HepG2 (cell line): ENCODE measurements at regions of chr1 and their contacts with region 1.

Region 1: GRCh38 chr1:198088360-198089071 is 68.3 kb upstream of the NEK7 start:
- DNase-seq: peak; percentile 7
- ATAC-seq: no peak
- H3K4me3 ChIP-seq: no peak overlapping the region
- H3K27ac ChIP-seq: no peak overlapping the region
- H3K4me1 ChIP-seq: peaks cover 15% of the 10 kb centered on the region
- H3K27me3 ChIP-seq: no peaks in the 10 kb centered on the region
- CTCF ChIP-seq: peak; percentile 47
- EP300 ChIP-seq: no peak
- POLR2A ChIP-seq: no peak
- RAD21 ChIP-seq: no peak

Region 2: DNA sequence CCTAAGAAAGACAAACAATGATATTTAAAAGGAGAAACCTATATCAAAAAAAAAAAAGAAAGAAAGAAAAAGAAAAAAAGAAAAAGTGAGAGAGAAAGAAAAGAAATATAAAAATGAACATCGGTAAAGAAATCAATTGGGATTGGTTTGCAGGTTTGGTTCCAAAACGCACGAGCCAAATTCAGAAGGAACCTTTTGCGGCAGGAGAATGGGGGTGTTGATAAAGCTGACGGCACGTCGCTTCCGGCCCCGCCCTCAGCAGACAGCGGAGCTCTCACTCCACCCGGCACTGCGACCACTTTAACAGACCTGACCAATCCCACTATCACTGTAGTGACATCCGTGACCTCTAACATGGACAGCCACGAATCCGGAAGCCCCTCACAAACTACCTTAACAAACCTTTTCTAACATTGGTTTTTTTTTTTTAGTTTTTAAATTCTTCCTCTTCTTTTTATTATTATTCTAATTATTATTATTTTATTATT is 159.6 kb before region 1 on chr1:
- CTCF ChIA-PET with region 1: no interaction called
- POLR2A ChIA-PET with region 1: no interaction called
- in situ Hi-C with region 1: no loop called
- intact Hi-C with region 1: no loop called
- DNase-seq: no peak
- ATAC-seq: no peak
- H3K4me3 ChIP-seq: no peak overlapping the region
- H3K27ac ChIP-seq: no peak overlapping the region
- H3K4me1 ChIP-seq: no peaks in the 10 kb centered on the region
- H3K27me3 ChIP-seq: no peaks in the 10 kb centered on the region; a peak in 1 of 5 replicates
- CTCF ChIP-seq: no peak
- EP300 ChIP-seq: no peak
- POLR2A ChIP-seq: no peak
- RAD21 ChIP-seq: no peak

Region 3: GRCh38 chr1:198275597-198275996 is 187.1 kb after region 1 on chr1:
- CTCF ChIA-PET with region 1: no interaction called
- POLR2A ChIA-PET with region 1: no interaction called
- in situ Hi-C with region 1: no loop called
- intact Hi-C with region 1: loop called (anchors 10 kb)
- DNase-seq: no peak
- ATAC-seq: no peak
- H3K4me3 ChIP-seq: no peak overlapping the region
- H3K27ac ChIP-seq: no peak overlapping the region
- H3K4me1 ChIP-seq: no peaks in the 10 kb centered on the region
- H3K27me3 ChIP-seq: no peaks in the 10 kb centered on the region
- CTCF ChIP-seq: no peak
- EP300 ChIP-seq: no peak
- POLR2A ChIP-seq: no peak
- RAD21 ChIP-seq: no peak

Region 4: DNA sequence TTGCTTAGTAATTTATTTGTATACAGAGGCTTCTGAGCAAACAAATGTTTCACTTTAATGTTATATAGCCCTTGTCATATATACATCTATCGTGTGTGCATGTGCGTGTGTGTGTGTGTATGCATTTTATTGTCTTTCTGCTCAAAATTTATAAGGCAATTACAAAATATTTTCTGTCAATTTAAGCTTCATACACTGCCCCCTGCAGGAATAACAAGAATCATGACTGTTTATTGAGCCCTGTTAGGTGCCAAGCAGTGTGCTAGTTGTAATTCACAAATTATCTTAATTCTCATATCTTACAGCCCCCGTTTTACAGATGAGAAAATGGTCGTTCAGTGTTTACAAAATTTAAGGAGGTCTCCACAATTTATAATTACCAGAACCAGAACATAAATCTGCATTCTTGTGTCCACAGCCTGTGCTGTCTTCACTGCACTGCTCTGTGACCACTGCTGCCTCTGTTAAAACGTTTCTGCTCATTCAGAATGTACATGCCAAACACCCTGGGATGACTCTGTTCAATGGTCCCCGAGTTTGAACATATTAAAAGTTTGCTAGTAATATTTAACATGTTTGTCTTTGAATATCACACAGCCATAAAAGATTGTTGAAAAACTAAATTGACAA is 270.6 kb after region 1 on chr1:
- CTCF ChIA-PET with region 1: interaction called, 8 read pairs
- POLR2A ChIA-PET with region 1: no interaction called
- in situ Hi-C with region 1: no loop called
- intact Hi-C with region 1: loop called (anchors 1 kb)
- DNase-seq: peak; percentile 2
- ATAC-seq: no peak
- H3K4me3 ChIP-seq: no peak overlapping the region
- H3K27ac ChIP-seq: no peak overlapping the region
- H3K4me1 ChIP-seq: no peaks in the 10 kb centered on the region
- H3K27me3 ChIP-seq: no peaks in the 10 kb centered on the region
- CTCF ChIP-seq: peak; percentile 53
- EP300 ChIP-seq: no peak
- POLR2A ChIP-seq: no peak
- RAD21 ChIP-seq: no peak

Region 5: DNA sequence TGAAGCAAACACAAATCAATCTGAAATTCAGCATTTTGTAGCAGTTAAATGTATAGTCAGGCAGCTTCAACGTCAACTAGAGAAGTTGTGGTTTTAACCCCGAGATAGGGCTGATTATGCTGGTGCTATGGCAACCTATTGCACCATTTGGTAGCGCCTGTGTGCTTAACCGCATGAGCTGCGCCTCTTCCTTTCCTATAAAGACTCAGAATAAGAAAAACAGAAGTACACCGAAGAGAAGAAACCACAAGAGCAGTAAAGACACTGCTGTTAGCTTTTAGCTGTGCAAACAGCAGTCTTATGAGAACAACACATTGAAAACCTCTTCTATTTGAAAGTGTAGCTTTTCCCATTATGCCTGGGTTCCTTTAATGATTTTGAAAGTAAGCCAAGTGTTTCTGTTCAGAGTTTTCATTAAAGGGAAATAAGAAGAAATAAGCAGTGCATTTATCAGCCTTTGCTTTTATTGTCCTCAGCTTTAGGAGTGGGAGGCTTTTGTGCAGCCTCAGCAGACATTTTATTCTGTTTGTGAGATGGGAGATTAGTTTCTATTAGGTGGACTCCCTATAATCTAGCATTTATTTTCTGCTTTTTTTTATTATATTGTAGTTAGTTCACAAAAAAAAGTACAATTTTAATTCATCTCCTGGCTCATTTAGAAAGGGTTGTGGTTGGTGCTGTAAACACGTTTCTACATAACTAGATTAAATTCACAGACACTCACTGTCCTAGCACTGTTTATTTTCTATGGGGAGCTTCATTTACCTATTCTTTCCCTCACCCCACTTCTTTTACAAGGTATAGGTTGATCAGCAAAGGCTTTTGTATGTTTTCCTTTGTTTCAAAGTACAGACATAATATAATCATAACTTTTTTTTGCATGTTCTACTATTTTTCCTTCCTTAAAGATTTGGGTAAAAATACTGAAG is 593.6 kb after region 1 on chr1:
- CTCF ChIA-PET with region 1: no interaction called
- POLR2A ChIA-PET with region 1: no interaction called
- in situ Hi-C with region 1: loop called (anchors 25 kb)
- intact Hi-C with region 1: no loop called
- DNase-seq: no peak
- ATAC-seq: no peak
- H3K4me3 ChIP-seq: no peak overlapping the region
- H3K27ac ChIP-seq: no peak overlapping the region
- H3K4me1 ChIP-seq: no peaks in the 10 kb centered on the region
- H3K27me3 ChIP-seq: no peaks in the 10 kb centered on the region
- CTCF ChIP-seq: no peak
- EP300 ChIP-seq: no peak
- POLR2A ChIP-seq: no peak
- RAD21 ChIP-seq: no peak

Region 6: GRCh38 chr1:198699167-198700015 is 610.9 kb after region 1 on chr1:
- CTCF ChIA-PET with region 1: no interaction called
- POLR2A ChIA-PET with region 1: no interaction called
- in situ Hi-C with region 1: loop called (anchors 25 kb)
- intact Hi-C with region 1: loop called (anchors 5 kb)
- DNase-seq: peak; percentile 30
- ATAC-seq: peak; percentile 99
- H3K4me3 ChIP-seq: no peak overlapping the region
- H3K27ac ChIP-seq: no peak overlapping the region
- H3K4me1 ChIP-seq: no peaks in the 10 kb centered on the region
- H3K27me3 ChIP-seq: no peaks in the 10 kb centered on the region
- CTCF ChIP-seq: peak; percentile 79
- EP300 ChIP-seq: no peak
- POLR2A ChIP-seq: no peak
- RAD21 ChIP-seq: 0 out of 2 replicates have a peak, but pooled peaks have one; percentile 18